Dendritic cell treated with granulocyte-macrophage colony-stimulating factor and Interleukin-4, amounts not matched to agents 40 ng/mL and 50 ng/mL, for 4 days (primary cell): ENCODE measurements at regions of chr11 and their contacts with region 1.

Region 1: GRCh38 chr11:83836883-83837654 is 550.9 kb upstream of the CCDC90B start:
- H3K4me3 Mint-ChIP-seq: no peak overlapping the region
- H3K27ac Mint-ChIP-seq: no peak overlapping the region
- H3K4me1 Mint-ChIP-seq: no peaks in the 10 kb centered on the region
- H3K27me3 Mint-ChIP-seq: no peaks in the 10 kb centered on the region

Region 2: GRCh38 chr11:84261707-84262106 is 424.6 kb after region 1 on chr11:
- intact Hi-C with region 1: loop called (anchors 10 kb)
- H3K4me3 Mint-ChIP-seq: no peak overlapping the region
- H3K27ac Mint-ChIP-seq: no peak overlapping the region
- H3K4me1 Mint-ChIP-seq: no peaks in the 10 kb centered on the region
- H3K27me3 Mint-ChIP-seq: no peaks in the 10 kb centered on the region

Region 3: GRCh38 chr11:84384731-84385130 is 547.7 kb after region 1 on chr11:
- intact Hi-C with region 1: loop called (anchors 5 kb)
- H3K4me3 Mint-ChIP-seq: no peak overlapping the region
- H3K27ac Mint-ChIP-seq: no peak overlapping the region
- H3K4me1 Mint-ChIP-seq: no peaks in the 10 kb centered on the region
- H3K27me3 Mint-ChIP-seq: no peaks in the 10 kb centered on the region